ENCODE measurements at regions of chr4 and their contacts with region 1.

Region 1: GRCh38 chr4:26719954-26720552 is 136.2 kb downstream of the TBC1D19 start:
- DNase-seq: peak; percentile 12
- H3K4me3 ChIP-seq: no peak overlapping the region; a peak in 1 of 4 replicates
- H3K27ac ChIP-seq: no peak overlapping the region
- H3K4me1 ChIP-seq: no peaks in the 10 kb centered on the region
- H3K27me3 ChIP-seq: no peaks in the 10 kb centered on the region
- CTCF ChIP-seq: peak; percentile 91
- EP300 ChIP-seq: no peak
- RAD21 ChIP-seq: peak; percentile 83

Region 2: DNA sequence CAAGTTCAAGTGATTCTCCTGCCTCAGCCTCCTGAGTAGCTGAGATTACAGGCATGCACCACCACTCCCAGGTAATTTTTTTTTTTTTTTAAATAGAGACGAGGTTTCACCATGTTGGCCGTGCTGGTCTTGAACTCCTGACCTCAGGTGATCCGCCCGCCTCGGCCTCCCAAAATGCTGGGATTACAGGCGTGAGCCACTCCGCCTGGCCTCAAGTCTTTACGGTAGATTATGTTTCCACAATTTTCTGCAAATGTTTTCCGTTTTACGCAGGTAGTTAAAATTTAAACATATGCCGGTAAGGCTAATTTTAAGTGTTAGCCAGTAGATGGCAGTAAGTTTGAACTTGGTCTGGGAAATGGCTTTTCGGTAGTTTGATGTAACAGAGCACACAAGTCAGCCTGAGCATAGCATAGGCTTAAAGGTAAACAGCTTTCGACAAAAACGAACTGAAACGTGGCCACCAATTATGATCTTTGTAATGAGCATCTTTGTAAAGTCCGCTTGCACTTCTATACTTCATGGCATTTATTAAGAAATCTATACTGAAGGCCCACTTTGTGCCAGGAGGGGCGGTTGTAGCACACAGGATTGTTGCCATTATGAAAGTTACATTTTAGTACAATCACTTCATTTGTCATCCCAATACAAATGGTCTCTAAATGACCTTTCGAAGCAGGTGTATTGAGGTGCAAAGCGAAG is 260.8 kb before region 1 on chr4:
- CTCF ChIA-PET with region 1: interaction called, 43 read pairs
- POLR2A ChIA-PET with region 1: no interaction called
- DNase-seq: peak; percentile 56
- H3K4me3 ChIP-seq: no peak overlapping the region; a peak in 1 of 4 replicates
- H3K27ac ChIP-seq: no peak overlapping the region
- H3K4me1 ChIP-seq: no peaks in the 10 kb centered on the region
- H3K27me3 ChIP-seq: no peaks in the 10 kb centered on the region
- CTCF ChIP-seq: peak; percentile 76
- EP300 ChIP-seq: no peak
- RAD21 ChIP-seq: peak; percentile 79

Measured in SK-N-SH (cell line).